OCI-LY7 (cell line): ENCODE measurements at regions of chr1 and their contacts with region 1.

Region 1: DNA sequence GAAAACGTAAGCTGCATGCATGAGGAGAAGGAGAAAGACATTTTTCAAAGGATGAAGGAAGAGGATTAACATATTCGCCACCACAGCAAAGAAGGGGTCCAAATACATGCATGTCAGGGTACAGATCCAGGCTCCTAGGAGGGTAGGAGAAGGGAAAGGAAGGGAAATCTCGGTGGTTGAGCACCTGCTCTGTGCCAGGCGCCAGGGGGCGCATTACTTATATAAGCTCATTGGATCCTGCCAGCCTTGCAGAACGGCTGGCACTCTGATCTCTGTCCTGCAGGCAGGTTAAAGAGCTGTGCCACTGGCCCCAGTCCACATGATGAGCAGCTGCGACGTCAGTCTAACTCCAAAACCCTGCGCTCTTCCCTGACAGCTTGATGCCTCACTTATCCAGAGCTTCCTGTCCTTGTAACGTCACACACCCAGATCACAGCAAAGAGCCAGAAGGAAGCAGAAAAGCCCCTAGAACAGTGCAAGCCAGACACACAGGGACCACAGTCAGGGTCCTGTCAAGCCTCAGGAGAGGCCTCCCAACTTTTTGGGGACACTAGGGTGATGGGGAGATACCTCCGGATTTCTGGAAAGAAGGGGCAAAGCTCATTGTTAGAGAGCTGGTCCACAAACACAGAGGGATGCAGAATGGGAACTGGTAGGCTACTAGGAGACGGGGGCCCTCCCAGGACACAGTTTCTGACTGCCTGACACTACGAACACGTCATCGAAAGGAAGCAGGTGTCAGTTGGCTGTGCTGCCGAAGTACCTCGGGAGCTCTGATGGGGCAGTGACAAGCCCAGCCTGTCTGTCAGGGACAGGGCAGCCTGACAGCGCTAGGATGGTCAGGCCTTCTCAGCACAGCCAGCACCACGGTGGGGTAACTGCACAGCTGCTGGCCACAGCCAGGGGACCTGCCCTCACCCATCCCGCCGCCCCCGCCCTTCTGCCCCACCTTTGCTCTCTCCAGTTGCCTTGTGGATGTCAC is 99.1 kb downstream of the BEND5 start:
- DNase-seq: peak; percentile 75
- H3K4me3 ChIP-seq: no peak overlapping the region
- H3K27ac ChIP-seq: no peak overlapping the region
- H3K4me1 ChIP-seq: no peaks in the 10 kb centered on the region
- CTCF ChIP-seq: peak; percentile 85

Region 2: DNA sequence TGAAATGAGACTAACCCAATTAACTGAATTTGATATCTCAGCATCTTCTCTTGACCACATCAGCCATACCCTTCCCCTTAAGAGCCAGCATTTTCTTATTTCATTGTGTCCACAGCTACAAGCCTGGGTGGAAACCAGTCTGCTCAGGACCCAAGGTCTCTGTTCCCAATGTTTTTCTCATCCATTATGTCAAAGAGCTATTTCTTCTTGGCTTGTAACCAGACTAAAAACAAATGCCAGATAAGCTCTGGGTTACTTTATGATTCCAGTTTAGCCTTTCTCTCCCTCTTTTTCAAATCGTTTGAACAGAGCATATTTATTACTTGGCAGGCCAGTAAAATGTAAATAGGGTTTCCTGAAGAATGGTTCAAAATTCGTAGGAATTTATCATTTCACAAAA is 96.3 kb before region 1 on chr1:
- CTCF ChIA-PET with region 1: no interaction called
- POLR2A ChIA-PET with region 1: no interaction called
- intact Hi-C with region 1: no loop called
- DNase-seq: no peak
- H3K4me3 ChIP-seq: no peak overlapping the region
- H3K27ac ChIP-seq: no peak overlapping the region
- H3K4me1 ChIP-seq: no peaks in the 10 kb centered on the region
- CTCF ChIP-seq: no peak

Region 3: GRCh38 chr1:48817505-48818114 is 140.0 kb after region 1 on chr1:
- CTCF ChIA-PET with region 1: interaction called, 9 read pairs
- POLR2A ChIA-PET with region 1: interaction called, 3 read pairs
- intact Hi-C with region 1: loop called (anchors 2 kb)
- DNase-seq: peak; percentile 60
- H3K4me3 ChIP-seq: no peak overlapping the region
- H3K27ac ChIP-seq: no peak overlapping the region
- H3K4me1 ChIP-seq: no peaks in the 10 kb centered on the region
- CTCF ChIP-seq: peak; percentile 87